Activated CD4-positive, alpha-beta memory T cell treated with anti-CD3 and anti-CD28 coated beads, Interleukin-2, amount 10 ng/mL, durations not matched to agents 7 days and 5 days (primary cell): ENCODE measurements at regions of chr17 and their contacts with region 1.

Region 1: DNA sequence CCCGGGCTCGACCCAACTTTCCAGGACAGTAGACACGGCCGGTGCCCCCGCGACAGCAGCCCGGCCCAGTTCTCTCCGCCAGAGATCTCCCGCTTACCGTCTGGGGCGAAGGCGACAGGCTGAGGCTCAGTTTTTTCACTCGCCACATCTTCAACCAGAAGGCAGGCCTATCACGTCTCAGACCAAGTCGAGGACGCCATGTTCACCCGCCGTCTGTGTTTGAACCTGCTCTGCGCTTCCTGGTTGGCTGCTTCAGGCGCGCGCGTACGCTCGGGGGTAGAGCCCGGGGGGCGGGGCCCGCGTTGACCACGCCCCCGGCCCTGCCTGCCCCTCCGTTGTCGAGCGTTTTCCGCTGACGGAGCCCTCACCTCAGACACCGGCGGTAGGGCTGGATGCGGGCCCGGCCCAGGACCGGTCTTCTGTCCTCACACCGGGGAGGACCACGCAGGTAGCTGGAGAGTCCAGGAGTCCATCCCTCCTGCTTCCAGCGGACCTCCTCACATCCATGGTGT is at the start of gene SPAG5:
- DNase-seq: peak; percentile 96
- H3K4me3 Mint-ChIP-seq: peak within 1 kb of the TSS; percentile 85
- H3K27ac Mint-ChIP-seq: peak within 1 kb of the TSS; percentile 99
- H3K4me1 Mint-ChIP-seq: peaks cover 24% of the 10 kb centered on the region
- H3K27me3 Mint-ChIP-seq: no peaks in the 10 kb centered on the region
- total RNA-seq, gene SPAG5: 125 to 127 TPM

Region 2: DNA sequence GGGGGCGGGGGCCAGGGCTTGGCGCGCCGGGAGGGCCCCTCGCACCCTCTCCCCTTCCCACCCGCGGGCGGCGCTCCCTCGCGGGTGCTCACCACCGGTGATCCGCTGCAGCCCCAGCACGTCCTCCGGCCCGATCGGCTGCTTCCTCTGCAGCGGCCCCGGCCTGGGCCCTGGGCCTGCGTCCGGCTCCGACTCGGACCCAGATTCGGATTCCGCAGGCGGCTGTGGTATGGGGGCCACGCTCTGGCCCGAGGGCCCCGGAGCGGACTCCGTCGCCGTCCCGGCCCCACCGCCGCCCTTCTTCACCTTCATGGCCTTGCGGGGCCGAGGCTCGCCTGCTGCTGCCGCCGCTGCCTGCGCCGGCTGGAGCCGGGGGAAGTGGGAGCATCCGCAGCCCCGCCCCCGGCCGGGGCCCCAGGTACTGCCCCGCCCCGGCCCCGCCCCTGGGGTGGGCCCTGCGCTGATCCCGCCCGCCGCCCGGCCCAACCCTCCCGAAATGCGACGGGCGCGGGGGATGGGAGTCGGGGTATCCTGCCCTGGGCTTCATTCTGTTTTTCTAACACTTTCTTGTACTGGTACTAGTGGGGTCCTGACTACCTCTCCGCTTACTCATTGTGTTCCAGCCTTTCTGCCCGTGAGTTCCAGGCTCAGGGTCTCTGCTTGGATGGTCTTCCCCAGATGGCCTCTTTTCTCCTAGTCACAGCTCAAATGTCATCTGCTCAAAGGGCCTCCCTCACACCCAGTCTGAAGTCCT is 46.4 kb before region 1 on chr17 and contains the start of gene UNC119:
- CTCF ChIA-PET with region 1: interaction called, 4 read pairs
- POLR2A ChIA-PET with region 1: interaction called, 33 read pairs
- DNase-seq: peak; percentile 84
- H3K4me3 Mint-ChIP-seq: peak within 1 kb of the TSS; percentile 80
- H3K27ac Mint-ChIP-seq: peak within 1 kb of the TSS; percentile 58
- H3K4me1 Mint-ChIP-seq: peaks cover 46% of the 10 kb centered on the region
- H3K27me3 Mint-ChIP-seq: no peaks in the 10 kb centered on the region
- total RNA-seq, gene UNC119: 46.2 to 61.1 TPM

Region 3: DNA sequence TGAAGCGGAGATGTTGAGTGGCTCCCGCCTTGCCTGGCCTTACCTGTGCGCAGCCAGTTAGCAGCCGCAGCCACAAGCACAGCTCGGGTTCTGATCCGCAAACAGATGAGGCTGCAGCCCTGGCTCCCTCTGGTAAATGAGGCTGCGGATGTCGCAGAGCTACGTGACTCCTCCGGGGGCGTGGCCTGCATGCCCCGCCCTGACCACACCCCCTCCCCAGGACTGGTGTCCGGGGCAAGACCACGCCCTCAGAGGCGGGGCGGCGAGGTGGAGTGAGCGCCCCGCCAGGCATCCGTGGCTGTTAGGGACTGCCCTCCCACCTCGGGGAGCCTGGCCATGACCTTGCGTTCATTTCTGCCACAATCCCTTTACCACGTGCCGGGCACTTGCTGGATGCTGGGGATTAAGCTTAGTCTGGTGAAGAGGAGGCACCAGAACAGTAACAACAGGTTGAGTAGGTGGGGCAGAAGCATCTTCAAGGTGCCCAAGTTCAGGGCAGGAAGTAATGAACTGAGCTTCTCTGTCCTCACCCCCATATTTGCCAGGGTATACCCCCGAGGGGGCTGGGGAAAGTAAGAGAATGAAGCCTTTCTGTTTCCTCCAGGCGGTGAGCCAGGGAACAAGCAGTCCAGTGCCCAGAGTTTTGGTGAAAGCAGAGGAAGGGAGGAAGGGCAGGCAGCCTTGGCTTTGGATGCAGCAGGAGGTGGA is 21.9 kb before region 1 on chr17 and contains the start of gene ALDOC:
- CTCF ChIA-PET with region 1: interaction called, 6 read pairs
- POLR2A ChIA-PET with region 1: interaction called, 61 read pairs
- DNase-seq: peak; percentile 98
- H3K4me3 Mint-ChIP-seq: peak within 1 kb of the TSS; percentile 84
- H3K27ac Mint-ChIP-seq: peak within 1 kb of the TSS; percentile 72
- H3K4me1 Mint-ChIP-seq: peaks cover 73% of the 10 kb centered on the region
- H3K27me3 Mint-ChIP-seq: no peaks in the 10 kb centered on the region
- total RNA-seq, gene ALDOC: 140 to 147 TPM

Region 4: GRCh38 chr17:28634206-28634856 is 35.5 kb after region 1 on chr17:
- CTCF ChIA-PET with region 1: no interaction called
- POLR2A ChIA-PET with region 1: no interaction called
- DNase-seq: no peak
- H3K4me3 Mint-ChIP-seq: no peak overlapping the region
- H3K27ac Mint-ChIP-seq: no peak overlapping the region
- H3K4me1 Mint-ChIP-seq: peaks cover 9% of the 10 kb centered on the region
- H3K27me3 Mint-ChIP-seq: no peaks in the 10 kb centered on the region

Region 5: DNA sequence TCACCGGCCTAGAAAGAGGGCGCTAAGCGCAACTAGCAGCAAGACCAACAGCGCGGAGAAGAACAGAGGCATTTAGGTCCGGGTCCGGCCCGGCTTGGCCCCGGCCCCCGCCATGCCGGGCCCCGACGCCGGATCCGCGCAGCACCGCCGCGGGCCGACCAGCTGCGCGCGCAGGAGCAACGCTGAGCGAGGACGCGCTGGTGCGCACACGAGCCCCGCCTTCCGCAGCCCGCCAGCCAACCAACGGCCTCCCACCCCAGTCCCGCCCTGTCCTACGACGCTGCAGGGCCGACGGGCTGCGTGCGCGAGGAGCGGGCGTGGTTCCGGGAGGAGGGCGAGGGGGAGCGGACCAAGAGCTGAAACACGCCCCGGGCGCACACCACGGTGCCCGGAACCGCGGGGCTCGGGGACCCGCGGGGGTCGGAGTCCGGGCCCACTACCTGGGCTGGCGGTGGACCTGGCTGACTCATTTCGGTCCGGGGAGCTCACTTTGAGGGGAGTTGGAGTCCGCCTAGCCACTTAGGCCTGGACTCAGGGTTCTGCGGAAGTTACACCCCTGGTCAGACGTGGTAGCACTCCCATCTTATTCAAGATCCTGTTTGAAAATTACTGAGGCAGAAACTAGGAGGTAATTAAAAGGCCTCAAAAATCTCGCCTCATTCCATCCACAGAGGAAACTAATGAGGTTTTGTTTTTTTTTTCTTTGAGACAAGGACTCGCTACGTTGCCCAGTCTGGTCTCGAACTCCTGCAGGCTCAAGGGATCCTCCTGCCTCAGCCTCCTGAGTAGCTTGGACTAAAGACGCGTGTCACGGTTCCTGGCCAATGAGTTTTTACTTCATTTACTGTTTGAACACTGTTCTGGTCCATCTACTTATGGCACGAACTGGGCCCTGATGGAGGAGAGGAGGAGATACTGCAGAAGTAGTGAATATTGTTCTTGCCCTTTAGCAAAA is 46.4 kb after region 1 on chr17 and contains the start of gene BLTP2:
- CTCF ChIA-PET with region 1: interaction called, 7 read pairs
- POLR2A ChIA-PET with region 1: interaction called, 45 read pairs
- DNase-seq: peak; percentile 97
- H3K4me3 Mint-ChIP-seq: peak within 1 kb of the TSS; percentile 93
- H3K27ac Mint-ChIP-seq: peak within 1 kb of the TSS; percentile 86
- H3K4me1 Mint-ChIP-seq: peaks cover 42% of the 10 kb centered on the region
- H3K27me3 Mint-ChIP-seq: no peaks in the 10 kb centered on the region
- total RNA-seq, gene BLTP2: 120 to 128 TPM

Region 6: GRCh38 chr17:28710861-28711722 is 112.2 kb after region 1 on chr17:
- CTCF ChIA-PET with region 1: interaction called, 4 read pairs
- POLR2A ChIA-PET with region 1: interaction called, 12 read pairs
- DNase-seq: peak; percentile 92
- H3K4me3 Mint-ChIP-seq: peak overlapping the region; percentile 80
- H3K27ac Mint-ChIP-seq: peak overlapping the region; percentile 90
- H3K4me1 Mint-ChIP-seq: peaks cover 22% of the 10 kb centered on the region
- H3K27me3 Mint-ChIP-seq: peaks cover 17% of the 10 kb centered on the region

Region 7: DNA sequence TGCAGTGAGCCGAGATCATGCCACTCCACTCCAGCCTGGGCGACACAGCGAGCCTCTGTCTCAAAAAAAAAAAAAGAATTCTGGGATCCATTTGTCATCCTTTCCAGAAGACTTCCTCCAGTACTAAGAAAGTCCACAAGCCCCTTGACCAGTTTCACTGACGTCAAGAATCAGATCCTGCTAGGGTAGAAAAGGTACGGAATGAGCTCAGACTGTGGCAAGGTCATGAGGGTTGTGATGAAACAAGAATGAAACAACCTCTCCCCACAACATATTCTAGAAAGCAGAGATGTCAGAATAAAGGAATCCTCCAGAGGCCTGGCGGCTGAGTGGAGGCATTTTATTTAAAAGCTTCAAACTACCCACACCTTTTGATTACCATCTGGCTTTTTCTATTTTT is 174.9 kb after region 1 on chr17:
- CTCF ChIA-PET with region 1: no interaction called
- POLR2A ChIA-PET with region 1: no interaction called
- DNase-seq: no peak
- H3K4me3 Mint-ChIP-seq: no peak overlapping the region
- H3K27ac Mint-ChIP-seq: no peak overlapping the region
- H3K4me1 Mint-ChIP-seq: peaks cover 21% of the 10 kb centered on the region
- H3K27me3 Mint-ChIP-seq: no peaks in the 10 kb centered on the region

Region 8: DNA sequence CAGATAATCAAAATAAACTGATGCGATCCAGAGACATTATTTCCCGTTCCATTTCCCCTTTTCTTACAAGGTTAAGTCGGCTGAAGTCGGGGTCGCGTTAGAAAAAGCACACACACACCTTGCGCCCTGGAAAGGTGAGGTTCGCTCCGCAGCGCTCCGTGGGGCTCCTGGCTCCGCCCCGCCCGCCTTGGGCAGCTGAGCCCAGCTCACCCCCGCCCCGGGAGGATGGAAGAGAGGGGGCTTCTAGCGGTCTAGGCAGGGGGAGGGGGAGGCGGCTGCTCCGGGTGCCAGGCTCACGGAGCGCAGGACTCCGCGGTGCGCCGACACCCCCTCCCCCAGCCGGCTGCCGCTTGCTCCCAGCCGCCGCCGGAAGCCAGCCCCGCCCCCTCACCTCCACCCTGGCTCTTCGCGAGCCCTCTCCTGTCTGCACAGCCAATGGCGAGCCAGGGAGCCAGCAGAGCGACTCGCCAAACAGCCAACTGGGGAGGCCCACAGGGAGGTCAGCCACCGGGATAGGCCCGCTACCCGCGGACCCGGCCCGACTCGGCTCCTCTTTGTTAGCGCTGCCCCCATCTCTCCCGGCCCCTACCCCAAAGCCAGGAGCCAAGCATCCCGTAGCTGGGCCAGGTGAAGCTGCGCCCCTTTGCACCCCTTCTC is 213.4 kb after region 1 on chr17:
- CTCF ChIA-PET with region 1: no interaction called
- POLR2A ChIA-PET with region 1: no interaction called
- DNase-seq: peak; percentile 96
- H3K4me3 Mint-ChIP-seq: peak overlapping the region; percentile 73
- H3K27ac Mint-ChIP-seq: peak overlapping the region; percentile 76
- H3K4me1 Mint-ChIP-seq: peaks cover 37% of the 10 kb centered on the region
- H3K27me3 Mint-ChIP-seq: no peaks in the 10 kb centered on the region